Activated naive CD8-positive, alpha-beta T cell treated with anti-CD3 and anti-CD28 coated beads, Interleukin-2, amount 10 ng/mL, durations not matched to agents 7 days and 5 days (primary cell): ENCODE measurements at regions of chr22 and their contacts with region 1.

Region 1: DNA sequence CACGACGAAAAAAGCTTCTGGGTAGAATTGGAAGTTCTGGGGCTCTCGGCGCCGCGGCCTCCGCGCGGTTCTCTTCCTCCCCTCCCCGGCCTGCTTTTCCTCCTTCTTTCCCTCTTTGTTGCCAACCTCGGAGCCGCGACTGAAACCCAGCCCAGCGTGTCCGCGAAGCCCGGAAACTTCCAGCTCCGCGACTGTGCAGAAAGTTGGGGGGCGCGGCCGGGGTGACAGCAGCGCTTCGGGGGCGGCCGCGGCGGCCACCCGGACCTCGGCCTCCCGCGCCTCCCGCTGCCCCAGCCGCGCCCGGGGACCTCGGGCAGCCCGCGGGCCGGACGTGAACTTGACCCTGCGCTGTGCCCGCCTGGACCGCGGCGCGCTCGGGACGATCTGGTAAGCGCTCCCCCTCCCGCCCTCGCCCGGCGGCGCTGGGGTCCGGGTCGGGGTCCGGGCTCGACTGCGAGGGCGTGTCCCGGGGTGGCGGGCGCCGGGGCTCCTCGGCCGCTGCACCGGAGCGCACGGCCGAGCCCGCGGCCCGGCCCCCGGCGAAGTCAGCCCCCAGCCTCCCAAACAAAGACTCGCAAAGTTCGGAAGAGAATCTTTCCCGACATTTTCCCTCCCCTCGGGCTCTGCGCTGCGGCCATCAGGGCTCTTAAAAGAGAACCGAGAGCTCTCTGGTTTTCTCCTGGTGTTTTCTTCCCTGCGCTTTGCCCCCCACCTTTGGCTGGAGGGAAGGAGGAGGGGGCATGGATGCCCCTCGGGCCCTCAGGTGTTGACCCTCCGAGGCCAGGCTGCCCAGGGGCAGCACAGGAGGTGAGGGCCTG is 67.9 kb upstream of the WNT7B start:
- DNase-seq: peak; percentile 67
- ATAC-seq: peak; percentile 61
- H3K4me3 Mint-ChIP-seq: peak overlapping the region; percentile 86
- H3K27ac Mint-ChIP-seq: peak overlapping the region; percentile 85
- H3K4me1 Mint-ChIP-seq: peaks cover 4% of the 10 kb centered on the region
- H3K27me3 Mint-ChIP-seq: peaks cover 2% of the 10 kb centered on the region

Region 2: DNA sequence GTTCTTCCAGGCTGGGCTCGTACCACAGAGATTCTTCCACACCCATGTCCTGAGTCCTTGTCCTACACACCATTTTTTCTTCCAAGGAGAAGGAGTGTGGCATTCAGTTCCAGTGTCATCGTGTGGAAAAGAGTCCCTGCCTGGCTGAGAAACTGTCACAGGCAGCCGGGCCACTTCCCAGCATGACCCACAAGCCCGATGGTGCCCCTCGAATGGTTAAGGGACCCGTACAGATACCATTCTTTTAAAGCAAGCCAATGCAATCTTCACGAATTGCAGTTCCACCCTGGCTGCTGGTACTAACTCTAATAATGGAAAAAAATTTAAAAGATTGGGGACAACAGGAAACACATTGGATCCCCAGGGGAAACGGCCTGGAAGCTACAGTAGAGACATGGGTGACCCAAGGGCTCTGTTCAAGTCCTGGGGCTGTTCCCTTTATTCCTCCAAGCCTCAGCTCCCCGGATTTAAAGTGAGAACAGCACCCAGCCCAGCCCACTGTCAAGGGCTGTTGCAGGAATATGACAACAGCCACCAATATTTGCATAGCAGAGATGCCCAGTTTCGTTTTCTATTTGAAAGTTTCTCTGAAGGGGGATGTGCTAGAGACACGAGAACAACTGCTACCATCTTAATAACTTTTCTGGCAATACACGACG is 13.1 kb after region 1 on chr22:
- POLR2A ChIA-PET with region 1: interaction called, 14 read pairs
- DNase-seq: peak; percentile 47
- ATAC-seq: peak; percentile 82
- H3K4me3 Mint-ChIP-seq: peak overlapping the region; percentile 67
- H3K27ac Mint-ChIP-seq: peak overlapping the region; percentile 78
- H3K4me1 Mint-ChIP-seq: peaks cover 25% of the 10 kb centered on the region
- H3K27me3 Mint-ChIP-seq: no peaks in the 10 kb centered on the region